ENCODE measurements at regions of chr7 and their contacts with region 1.

Region 1: GRCh38 chr7:85554236-85555178 is 367.7 kb upstream of the SEMA3D start:
- DNase-seq: peak; percentile 49
- H3K4me3 ChIP-seq: no peak overlapping the region
- CTCF ChIP-seq: peak; percentile 59

Region 2: GRCh38 chr7:85030893-85031292 is 523.6 kb before region 1 on chr7:
- CTCF ChIA-PET with region 1: interaction called, 25 read pairs
- POLR2A ChIA-PET with region 1: no interaction called
- DNase-seq: peak; percentile 26
- H3K4me3 ChIP-seq: no peak overlapping the region
- CTCF ChIP-seq: peak; percentile 8

Region 3: GRCh38 chr7:85186521-85187241 is 367.8 kb before region 1 on chr7 and contains the start of gene SEMA3D:
- CTCF ChIA-PET with region 1: interaction called, 50 read pairs
- POLR2A ChIA-PET with region 1: no interaction called
- DNase-seq: no peak
- H3K4me3 ChIP-seq: peak within 1 kb of the TSS; percentile 82
- CTCF ChIP-seq: peak; percentile 96

Region 4: GRCh38 chr7:85464042-85464651 is 90.4 kb before region 1 on chr7:
- CTCF ChIA-PET with region 1: interaction called, 38 read pairs
- POLR2A ChIA-PET with region 1: no interaction called
- DNase-seq: no peak
- H3K4me3 ChIP-seq: no peak overlapping the region
- CTCF ChIP-seq: no peak

Region 5: GRCh38 chr7:85829817-85830432 is 275.4 kb after region 1 on chr7:
- CTCF ChIA-PET with region 1: interaction called, 18 read pairs
- POLR2A ChIA-PET with region 1: no interaction called
- DNase-seq: no peak
- H3K4me3 ChIP-seq: no peak overlapping the region
- CTCF ChIP-seq: peak; percentile 17